Ascending aorta (tissue), 2 donors: ENCODE measurements at regions of chr4 and their contacts with region 1.

Region 1: DNA sequence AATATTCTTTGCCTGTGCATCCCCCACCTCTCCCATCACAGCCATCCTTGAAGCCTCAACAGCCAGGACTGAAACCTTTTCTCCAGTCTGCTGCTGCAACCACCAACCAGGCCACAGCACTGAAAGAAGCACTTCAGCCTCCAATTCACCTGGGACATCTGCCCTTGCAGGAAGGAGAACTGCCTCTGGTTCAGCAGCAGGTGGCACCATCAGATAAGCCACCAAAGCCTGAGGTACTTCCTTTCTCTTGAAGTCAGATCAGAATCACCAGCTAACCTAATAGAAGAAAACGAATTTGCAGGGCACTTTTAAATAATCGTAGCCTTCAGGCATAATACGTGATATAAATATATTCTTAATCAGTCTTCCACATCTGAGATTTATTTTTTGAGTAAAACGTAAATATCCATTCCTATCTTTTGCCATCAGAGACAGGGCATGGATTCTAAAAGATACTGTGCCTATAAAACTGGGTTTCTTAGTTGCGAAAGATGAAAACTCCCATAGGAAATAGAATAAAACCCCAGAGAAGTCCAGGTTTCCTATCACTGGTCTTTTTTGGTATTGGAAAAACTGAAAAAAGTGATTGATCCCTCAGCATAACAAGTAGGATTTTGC is 9.5 kb downstream of the AMBN start:
- DNase-seq: peak in 1 of 2 donors; percentile 67
- H3K4me3 ChIP-seq: no peak overlapping the region
- H3K27ac ChIP-seq: no peak overlapping the region
- H3K4me1 ChIP-seq: no peaks in the 10 kb centered on the region
- H3K27me3 ChIP-seq: no peaks in the 10 kb centered on the region
- CTCF ChIP-seq: peak; percentile 54 to 70 (median 64)

Region 2: DNA sequence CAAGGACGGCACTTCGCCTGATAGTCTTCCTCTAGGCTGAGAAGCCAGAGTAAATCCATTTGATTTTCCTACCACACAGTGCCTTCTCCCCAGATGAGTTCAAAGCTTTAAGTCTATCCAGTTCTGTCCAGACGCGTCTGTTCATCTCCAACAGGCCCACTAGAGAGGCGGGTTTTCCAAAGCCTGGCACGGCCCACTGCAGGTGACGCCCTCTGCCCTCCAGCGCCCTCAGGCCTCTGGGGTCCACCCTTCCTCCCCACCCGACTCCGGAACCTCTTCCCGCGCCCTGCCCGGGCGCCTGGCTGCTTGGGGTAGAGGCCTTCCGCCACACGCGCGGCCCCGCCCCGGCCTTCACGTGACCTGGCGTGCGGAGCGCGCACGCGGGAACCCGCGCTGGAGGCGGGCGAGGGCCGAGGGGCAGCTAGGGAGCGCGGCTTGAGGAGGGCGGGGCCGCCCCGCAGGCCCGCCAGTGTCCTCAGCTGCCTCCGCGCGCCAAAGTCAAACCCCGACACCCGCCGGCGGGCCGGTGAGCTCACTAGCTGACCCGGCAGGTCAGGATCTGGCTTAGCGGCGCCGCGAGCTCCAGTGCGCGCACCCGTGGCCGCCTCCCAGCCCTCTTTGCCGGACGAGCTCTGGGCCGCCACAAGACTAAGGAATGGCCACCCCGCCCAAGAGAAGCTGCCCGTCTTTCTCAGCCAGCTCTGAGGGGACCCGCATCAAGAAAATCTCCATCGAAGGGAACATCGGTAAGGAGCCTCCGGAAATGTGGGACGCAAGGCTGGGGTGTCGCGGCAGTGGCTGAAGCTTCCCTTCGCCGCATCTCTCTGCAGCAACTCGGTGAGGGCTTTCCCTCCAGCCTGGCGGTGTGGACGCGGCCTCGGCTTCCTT is 391.9 kb after region 1 on chr4 and contains the start of gene DCK:
- intact Hi-C with region 1: loop called (anchors 10 kb)
- DNase-seq: peak; percentile 61 to 95
- H3K4me3 ChIP-seq: peak within 1 kb of the TSS; percentile 73 to 75
- H3K27ac ChIP-seq: peak within 1 kb of the TSS; percentile 76 to 86
- H3K4me1 ChIP-seq: peaks cover 6% of the 10 kb centered on the region in 2 donors
- H3K27me3 ChIP-seq: no peaks in the 10 kb centered on the region
- CTCF ChIP-seq: no peak
- total RNA-seq, gene DCK: 24.5 TPM

Region 3: GRCh38 chr4:71713611-71714203 is 1112.2 kb after region 1 on chr4:
- intact Hi-C with region 1: loop called (anchors 10 kb)
- DNase-seq: no peak
- H3K4me3 ChIP-seq: no peak overlapping the region
- H3K27ac ChIP-seq: no peak overlapping the region
- H3K4me1 ChIP-seq: no peaks in the 10 kb centered on the region
- H3K27me3 ChIP-seq: no peaks in the 10 kb centered on the region
- CTCF ChIP-seq: peak; percentile 41 to 64 (median 49)

Region 4: GRCh38 chr4:72302981-72303704 is 1701.6 kb after region 1 on chr4:
- intact Hi-C with region 1: no loop called
- DNase-seq: no peak
- H3K4me3 ChIP-seq: no peak overlapping the region
- H3K27ac ChIP-seq: no peak overlapping the region
- H3K4me1 ChIP-seq: no peaks in the 10 kb centered on the region
- H3K27me3 ChIP-seq: no peaks in the 10 kb centered on the region
- CTCF ChIP-seq: peak in 2 of 3 experiments; percentile 43 to 54